CD8-positive, alpha-beta memory T cell (primary cell): ENCODE measurements at regions of chr15 and their contacts with region 1.

Region 1: GRCh38 chr15:88904624-88905327 is 8.4 kb downstream of the MFGE8 start:
- DNase-seq: peak; percentile 84 to 96 (median 94)
- H3K4me3 ChIP-seq: peak overlapping the region; percentile 33
- H3K4me3 Mint-ChIP-seq: peak overlapping the region; percentile 6 to 55 (median 24)
- H3K27ac ChIP-seq: peak overlapping the region; percentile 21
- H3K27ac Mint-ChIP-seq: peak overlapping the region; percentile 78 to 99 (median 95)
- H3K4me1 ChIP-seq: peaks cover 32% of the 10 kb centered on the region
- H3K4me1 Mint-ChIP-seq: peaks cover 23 to 46% (median 39%) of the 10 kb centered on the region in 3 donors
- H3K27me3 ChIP-seq: no peaks in the 10 kb centered on the region
- H3K27me3 Mint-ChIP-seq: no peaks in the 10 kb centered on the region

Region 2: GRCh38 chr15:88727439-88727838 is 177.3 kb before region 1 on chr15:
- CTCF ChIA-PET with region 1: no interaction called
- POLR2A ChIA-PET with region 1: no interaction called
- DNase-seq: no peak
- H3K4me3 ChIP-seq: no peak overlapping the region
- H3K4me3 Mint-ChIP-seq: no peak overlapping the region
- H3K27ac ChIP-seq: no peak overlapping the region
- H3K27ac Mint-ChIP-seq: no peak overlapping the region
- H3K4me1 ChIP-seq: no peaks in the 10 kb centered on the region
- H3K4me1 Mint-ChIP-seq: no peaks in the 10 kb centered on the region
- H3K27me3 ChIP-seq: no peaks in the 10 kb centered on the region
- H3K27me3 Mint-ChIP-seq: peaks cover 11 to 32% of the 10 kb centered on the region in 2 donors

Region 3: GRCh38 chr15:88849376-88850072 is 55.3 kb before region 1 on chr15:
- CTCF ChIA-PET with region 1: no interaction called
- POLR2A ChIA-PET with region 1: no interaction called
- DNase-seq: no peak
- H3K4me3 ChIP-seq: no peak overlapping the region
- H3K4me3 Mint-ChIP-seq: no peak overlapping the region
- H3K27ac ChIP-seq: no peak overlapping the region
- H3K27ac Mint-ChIP-seq: no peak overlapping the region
- H3K4me1 ChIP-seq: no peaks in the 10 kb centered on the region
- H3K4me1 Mint-ChIP-seq: no peaks in the 10 kb centered on the region
- H3K27me3 ChIP-seq: no peaks in the 10 kb centered on the region
- H3K27me3 Mint-ChIP-seq: peaks cover 13 to 30% of the 10 kb centered on the region in 2 donors

Region 4: GRCh38 chr15:88878720-88879184 is 26.0 kb before region 1 on chr15:
- CTCF ChIA-PET with region 1: interaction called, 12 read pairs
- POLR2A ChIA-PET with region 1: no interaction called
- DNase-seq: peak in 2 of 5 donors; percentile 3 to 26
- H3K4me3 ChIP-seq: no peak overlapping the region
- H3K4me3 Mint-ChIP-seq: no peak overlapping the region
- H3K27ac ChIP-seq: no peak overlapping the region
- H3K27ac Mint-ChIP-seq: no peak overlapping the region
- H3K4me1 ChIP-seq: no peaks in the 10 kb centered on the region
- H3K4me1 Mint-ChIP-seq: peaks cover 0 to 2% (median 0%) of the 10 kb centered on the region in 3 donors
- H3K27me3 ChIP-seq: no peaks in the 10 kb centered on the region
- H3K27me3 Mint-ChIP-seq: no peaks in the 10 kb centered on the region

Region 5: GRCh38 chr15:88932271-88932874 is 27.6 kb after region 1 on chr15:
- CTCF ChIA-PET with region 1: no interaction called
- POLR2A ChIA-PET with region 1: no interaction called
- DNase-seq: no peak
- H3K4me3 ChIP-seq: no peak overlapping the region
- H3K4me3 Mint-ChIP-seq: no peak overlapping the region
- H3K27ac ChIP-seq: no peak overlapping the region
- H3K27ac Mint-ChIP-seq: no peak overlapping the region
- H3K4me1 ChIP-seq: no peaks in the 10 kb centered on the region
- H3K4me1 Mint-ChIP-seq: no peaks in the 10 kb centered on the region
- H3K27me3 ChIP-seq: no peaks in the 10 kb centered on the region
- H3K27me3 Mint-ChIP-seq: peaks cover 27 to 46% of the 10 kb centered on the region in 2 donors

Region 6: GRCh38 chr15:88959445-88959844 is 54.7 kb after region 1 on chr15:
- CTCF ChIA-PET with region 1: interaction called, 10 read pairs
- POLR2A ChIA-PET with region 1: no interaction called
- DNase-seq: no peak
- H3K4me3 ChIP-seq: no peak overlapping the region
- H3K4me3 Mint-ChIP-seq: no peak overlapping the region
- H3K27ac ChIP-seq: no peak overlapping the region
- H3K27ac Mint-ChIP-seq: no peak overlapping the region
- H3K4me1 ChIP-seq: no peaks in the 10 kb centered on the region
- H3K4me1 Mint-ChIP-seq: no peaks in the 10 kb centered on the region
- H3K27me3 ChIP-seq: no peaks in the 10 kb centered on the region
- H3K27me3 Mint-ChIP-seq: peaks cover 0 to 2% of the 10 kb centered on the region in 2 donors

Region 7: DNA sequence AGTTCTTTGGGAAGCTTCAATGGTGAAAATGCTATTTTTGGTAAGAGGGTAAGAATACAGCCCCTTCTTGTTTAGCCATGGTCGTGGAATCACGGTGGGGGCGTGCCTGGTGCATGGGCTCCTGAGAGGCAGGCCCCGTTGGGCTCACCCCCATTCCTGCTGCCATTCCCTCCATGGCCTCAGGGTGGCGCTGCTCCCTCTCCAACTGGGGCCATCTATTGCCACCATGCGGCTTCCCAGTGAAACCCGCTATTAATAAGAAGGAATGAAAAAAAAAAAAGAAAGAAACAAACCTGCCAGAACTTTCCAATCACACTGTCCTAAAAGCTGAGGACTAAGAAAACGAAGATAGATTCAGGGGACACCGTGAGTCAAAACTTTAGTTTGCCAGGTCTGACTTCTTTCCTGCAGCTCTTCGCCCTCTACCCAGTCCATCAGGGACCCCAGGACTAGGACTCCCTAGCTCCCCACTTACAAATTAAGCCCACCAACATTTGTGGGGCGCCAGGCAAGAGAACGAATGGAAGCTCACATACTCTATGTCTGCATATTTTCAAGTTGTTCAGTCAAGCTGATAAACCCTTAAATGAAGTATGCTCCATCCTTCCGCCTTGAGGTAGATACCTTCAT is 152.8 kb after region 1 on chr15:
- CTCF ChIA-PET with region 1: interaction called, 16 read pairs
- POLR2A ChIA-PET with region 1: no interaction called
- DNase-seq: peak; percentile 70 to 84 (median 71)
- H3K4me3 ChIP-seq: no peak overlapping the region
- H3K4me3 Mint-ChIP-seq: no peak overlapping the region
- H3K27ac ChIP-seq: no peak overlapping the region
- H3K27ac Mint-ChIP-seq: no peak overlapping the region
- H3K4me1 ChIP-seq: peaks cover 4% of the 10 kb centered on the region
- H3K4me1 Mint-ChIP-seq: peaks cover 6 to 10% (median 9%) of the 10 kb centered on the region in 3 donors
- H3K27me3 ChIP-seq: no peaks in the 10 kb centered on the region
- H3K27me3 Mint-ChIP-seq: peaks cover 2 to 5% of the 10 kb centered on the region in 2 donors

Region 8: GRCh38 chr15:89129123-89129815 is 224.5 kb after region 1 on chr15:
- CTCF ChIA-PET with region 1: interaction called, 24 read pairs
- POLR2A ChIA-PET with region 1: no interaction called
- DNase-seq: peak; percentile 26 to 61 (median 47)
- H3K4me3 ChIP-seq: no peak overlapping the region
- H3K4me3 Mint-ChIP-seq: no peak overlapping the region
- H3K27ac ChIP-seq: no peak overlapping the region
- H3K27ac Mint-ChIP-seq: peak overlapping the region in 1 of 8 donors; percentile 1
- H3K4me1 ChIP-seq: peaks cover 13% of the 10 kb centered on the region
- H3K4me1 Mint-ChIP-seq: peaks cover 12 to 34% (median 26%) of the 10 kb centered on the region in 3 donors
- H3K27me3 ChIP-seq: no peaks in the 10 kb centered on the region
- H3K27me3 Mint-ChIP-seq: no peaks in the 10 kb centered on the region